Heart left ventricle (tissue), 16 donors: ENCODE measurements at regions of chr20 and their contacts with region 1.

Region 1: DNA sequence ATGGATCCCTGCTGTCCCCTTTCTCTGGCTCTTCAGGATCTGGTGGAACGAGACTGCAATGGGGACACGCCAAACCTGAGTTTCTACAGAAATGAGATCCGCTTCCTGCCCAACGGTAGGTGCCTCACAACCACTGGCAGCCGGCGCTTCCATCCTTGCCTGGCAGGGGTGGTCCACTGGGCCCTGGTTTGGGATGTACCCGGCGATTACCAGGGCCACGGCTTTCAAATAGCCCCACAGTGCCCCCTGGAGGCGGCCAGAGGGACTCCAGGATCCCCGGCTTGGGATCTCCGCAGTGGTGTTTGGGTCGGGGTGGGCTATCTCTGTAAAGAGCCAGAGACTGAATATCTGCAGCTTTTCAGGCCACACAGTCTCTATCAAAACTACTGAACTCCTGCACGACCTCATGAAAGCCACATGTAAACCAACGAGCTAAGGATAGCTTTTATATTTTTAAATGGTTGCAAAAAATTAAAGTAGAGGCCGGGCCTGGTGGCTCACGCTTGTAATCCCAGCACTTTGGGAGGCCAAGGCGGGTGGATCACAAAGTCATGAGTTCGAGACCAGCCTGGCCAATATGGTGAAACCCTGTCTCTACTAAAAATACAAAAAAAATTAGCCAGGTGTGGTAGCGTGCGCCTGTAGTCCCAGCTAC is 3.7 kb downstream of the OGFR start:
- DNase-seq: peak; percentile 62 to 88 (median 67)
- ATAC-seq: peak; percentile 27 to 67 (median 46)
- H3K4me3 ChIP-seq: no peak overlapping the region
- H3K27ac ChIP-seq: no peak overlapping the region
- H3K4me1 ChIP-seq: peaks cover 0 to 44% (median 33%) of the 10 kb centered on the region in 12 donors
- H3K27me3 ChIP-seq: no peaks in the 10 kb centered on the region
- CTCF ChIP-seq: peak; percentile 91 to 96 (median 94)
- POLR2A ChIP-seq: no peak

Region 2: GRCh38 chr20:62668441-62669027 is 139.8 kb before region 1 on chr20:
- intact Hi-C with region 1: loop called in 9 of 10 experiments (anchors 1 to 5 kb)
- DNase-seq: peak in 4 of 5 donors; percentile 63 to 73 (median 66)
- ATAC-seq: peak in 3 of 4 donors; percentile 53 to 61 (median 56)
- H3K4me3 ChIP-seq: no peak overlapping the region
- H3K27ac ChIP-seq: no peak overlapping the region
- H3K4me1 ChIP-seq: peaks cover 0 to 27% (median 12%) of the 10 kb centered on the region in 12 donors
- H3K27me3 ChIP-seq: peaks cover 0 to 2% (median 0%) of the 10 kb centered on the region in 9 donors
- CTCF ChIP-seq: peak; percentile 75 to 87 (median 83)
- POLR2A ChIP-seq: no peak

Region 3: DNA sequence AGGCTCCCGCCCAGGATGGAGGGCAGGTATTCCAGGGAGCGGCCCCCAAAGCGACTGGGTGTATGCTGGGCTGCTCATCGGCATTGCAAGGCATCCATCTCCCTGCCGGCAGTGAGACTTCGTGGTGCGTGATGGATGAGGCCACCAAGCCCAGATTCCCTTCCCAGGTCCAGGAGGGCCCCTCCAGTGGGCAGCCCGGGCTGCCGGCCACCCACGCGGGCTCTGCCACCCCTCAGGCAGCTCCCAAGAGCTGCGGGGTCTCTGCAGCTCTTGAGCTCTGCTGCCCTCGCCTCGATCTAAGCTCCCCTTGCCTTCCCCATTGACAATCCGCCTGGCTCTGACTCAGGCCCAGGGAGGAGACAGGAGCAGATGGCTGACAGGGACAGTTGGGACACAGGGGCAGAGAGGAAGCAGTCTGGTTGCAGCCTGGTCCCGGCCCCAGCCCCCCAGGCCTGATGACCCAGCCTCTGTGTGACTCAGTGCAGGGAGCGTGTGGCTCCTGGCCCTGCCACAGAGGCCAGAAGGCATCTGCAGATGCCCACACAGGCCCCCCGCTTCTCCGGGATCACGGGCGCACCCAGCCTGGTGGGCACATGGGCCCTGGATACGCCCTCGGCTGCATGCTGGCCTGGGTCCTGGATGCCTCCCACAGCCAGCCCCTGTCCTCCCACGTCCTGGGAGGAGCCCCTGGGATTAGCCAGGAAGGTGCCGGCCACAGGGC is 133.0 kb before region 1 on chr20:
- intact Hi-C with region 1: loop called in 2 of 10 experiments (anchors 5 kb)
- DNase-seq: no peak
- ATAC-seq: peak in 1 of 4 donors; percentile 42
- H3K4me3 ChIP-seq: no peak overlapping the region
- H3K27ac ChIP-seq: no peak overlapping the region
- H3K4me1 ChIP-seq: peaks cover 0 to 19% (median 0%) of the 10 kb centered on the region in 12 donors
- H3K27me3 ChIP-seq: peaks cover 0 to 17% (median 0%) of the 10 kb centered on the region in 9 donors
- CTCF ChIP-seq: no peak
- POLR2A ChIP-seq: no peak